Vagina (tissue), 2 donors: ENCODE measurements at regions of chr18 and their contacts with region 1.

Region 1: DNA sequence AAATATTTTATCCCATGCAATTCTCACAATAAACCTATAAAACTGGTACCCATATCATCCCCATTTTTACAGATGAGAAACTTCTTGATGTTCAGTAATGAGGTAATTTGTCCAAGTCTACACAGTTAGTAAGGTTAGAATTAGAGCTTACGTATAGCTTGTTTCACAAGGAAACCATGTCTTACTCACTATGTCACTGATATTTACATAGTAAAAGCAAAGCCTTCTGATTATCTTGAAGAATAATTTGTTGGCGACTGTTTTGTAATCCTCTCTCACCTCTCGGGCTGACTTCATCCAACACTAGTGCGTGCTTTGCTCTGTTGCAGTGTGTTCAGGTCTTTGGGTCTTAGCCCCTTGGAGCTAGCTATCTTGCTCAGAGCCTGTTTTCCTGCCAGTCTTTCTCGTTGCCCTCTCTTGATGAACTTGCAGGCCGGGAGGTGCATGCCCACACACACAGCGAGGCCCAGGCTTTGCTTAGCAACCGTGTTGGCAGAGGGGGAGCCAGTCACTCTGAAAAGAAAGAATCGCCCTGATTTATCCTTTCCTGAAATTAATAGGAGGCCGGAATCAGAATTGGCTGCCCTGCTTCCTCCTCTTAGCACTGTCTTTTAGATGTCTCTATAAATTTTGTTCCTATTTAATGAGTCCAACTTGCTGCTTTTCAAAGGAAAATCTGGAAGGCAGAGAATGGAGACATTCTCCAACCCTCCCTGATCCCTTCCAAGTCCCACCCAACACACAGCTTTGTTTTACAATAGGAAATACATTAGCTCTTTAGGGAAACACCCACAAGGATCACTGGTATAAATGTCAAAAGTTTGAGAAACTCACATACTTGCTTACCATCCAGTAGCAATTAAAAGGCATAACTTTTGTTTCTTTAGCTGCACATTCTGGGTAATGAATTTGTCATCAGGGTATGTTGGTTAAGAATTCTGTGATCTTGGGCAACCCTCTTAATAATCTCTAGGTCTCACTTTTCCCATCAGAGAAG is 97.6 kb upstream of the SEC11C start:
- DNase-seq: peak in 1 of 2 donors; percentile 94
- H3K4me3 ChIP-seq: no peak overlapping the region
- H3K27ac ChIP-seq: peak overlapping the region; percentile 6
- H3K4me1 ChIP-seq: peaks cover 23% of the 10 kb centered on the region
- H3K27me3 ChIP-seq: no peaks in the 10 kb centered on the region
- CTCF ChIP-seq: no peak
- POLR2A ChIP-seq: no peak

Region 2: GRCh38 chr18:58998401-58999203 is 43.5 kb before region 1 on chr18:
- intact Hi-C with region 1: loop called (anchors 10 kb)
- DNase-seq: no peak
- H3K4me3 ChIP-seq: peak overlapping the region in 1 of 2 donors; percentile 17
- H3K27ac ChIP-seq: peak overlapping the region; percentile 41
- H3K4me1 ChIP-seq: peaks cover 10% of the 10 kb centered on the region
- H3K27me3 ChIP-seq: no peaks in the 10 kb centered on the region
- CTCF ChIP-seq: no peak
- POLR2A ChIP-seq: no peak